T-cell (primary cell): ENCODE measurements at regions of chr12 and their contacts with region 1.

Region 1: DNA sequence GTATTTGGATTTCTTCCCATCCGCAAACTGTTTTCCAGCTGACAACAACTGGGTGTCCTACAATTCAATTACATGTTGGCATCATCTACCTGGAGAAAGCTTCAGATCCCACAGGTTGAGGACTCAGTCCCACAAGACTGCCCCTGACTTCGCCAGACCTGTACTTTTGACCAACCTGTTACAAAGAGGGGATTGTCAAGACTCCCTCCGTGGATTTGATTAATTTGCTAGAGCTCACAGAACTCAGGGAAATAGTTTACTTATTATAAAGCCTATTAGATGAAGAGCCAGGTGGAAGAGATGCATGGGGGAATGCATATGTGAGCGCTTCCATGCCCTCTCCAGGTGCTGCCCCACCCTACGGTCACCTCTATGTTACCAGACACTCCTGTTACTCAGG is 14.6 kb downstream of the RESF1 start:
- DNase-seq: no peak
- ATAC-seq: no peak
- H3K4me3 ChIP-seq: no peak overlapping the region
- H3K4me3 Mint-ChIP-seq: no peak overlapping the region
- H3K27ac ChIP-seq: no peak overlapping the region
- H3K27ac Mint-ChIP-seq: peak overlapping the region in 1 of 2 donors; percentile 48
- H3K4me1 ChIP-seq: peaks cover 0 to 22% of the 10 kb centered on the region in 2 experiments
- H3K4me1 Mint-ChIP-seq: peaks cover 28 to 49% (median 41%) of the 10 kb centered on the region in 3 donors
- H3K27me3 ChIP-seq: no peaks in the 10 kb centered on the region
- H3K27me3 Mint-ChIP-seq: no peaks in the 10 kb centered on the region

Region 2: GRCh38 chr12:31896514-31897039 is 77.2 kb before region 1 on chr12:
- CTCF ChIA-PET with region 1: no interaction called
- POLR2A ChIA-PET with region 1: no interaction called
- DNase-seq: peak; percentile 59 to 94 (median 85)
- ATAC-seq: peak; percentile 97 to 99 (median 98)
- H3K4me3 ChIP-seq: no peak overlapping the region
- H3K4me3 Mint-ChIP-seq: peak overlapping the region; percentile 60 to 64 (median 60)
- H3K27ac ChIP-seq: peak overlapping the region; percentile 94
- H3K27ac Mint-ChIP-seq: peak overlapping the region; percentile 95 to 99
- H3K4me1 ChIP-seq: peaks cover 12 to 75% of the 10 kb centered on the region in 2 experiments
- H3K4me1 Mint-ChIP-seq: peaks cover 63 to 77% (median 74%) of the 10 kb centered on the region in 3 donors
- H3K27me3 ChIP-seq: no peaks in the 10 kb centered on the region
- H3K27me3 Mint-ChIP-seq: no peaks in the 10 kb centered on the region

Region 3: GRCh38 chr12:32698285-32698684 is 724.5 kb after region 1 on chr12:
- CTCF ChIA-PET with region 1: interaction called in 1 of 2 experiments, 3 read pairs
- POLR2A ChIA-PET with region 1: interaction called in 1 of 2 experiments, 10 read pairs
- DNase-seq: no peak
- ATAC-seq: no peak
- H3K4me3 ChIP-seq: no peak overlapping the region
- H3K4me3 Mint-ChIP-seq: no peak overlapping the region
- H3K27ac ChIP-seq: no peak overlapping the region
- H3K27ac Mint-ChIP-seq: no peak overlapping the region
- H3K4me1 ChIP-seq: no peaks in the 10 kb centered on the region
- H3K4me1 Mint-ChIP-seq: peaks cover 21 to 26% (median 22%) of the 10 kb centered on the region in 3 donors
- H3K27me3 ChIP-seq: no peaks in the 10 kb centered on the region
- H3K27me3 Mint-ChIP-seq: no peaks in the 10 kb centered on the region